Activated CD4-positive, alpha-beta T cell treated with anti-CD3 and anti-CD28 coated beads for 36 hours (primary cell): ENCODE measurements at regions of chr6 and their contacts with region 1.

Region 1: GRCh38 chr6:2876210-2877056 is 26.7 kb downstream of the SERPINB9 start:
- DNase-seq: no peak
- ATAC-seq: peak; percentile 51
- H3K4me3 Mint-ChIP-seq: peak overlapping the region; percentile 74
- H3K27ac Mint-ChIP-seq: peak overlapping the region; percentile 87
- H3K4me1 Mint-ChIP-seq: peaks cover 81% of the 10 kb centered on the region
- H3K27me3 Mint-ChIP-seq: no peaks in the 10 kb centered on the region

Region 2: DNA sequence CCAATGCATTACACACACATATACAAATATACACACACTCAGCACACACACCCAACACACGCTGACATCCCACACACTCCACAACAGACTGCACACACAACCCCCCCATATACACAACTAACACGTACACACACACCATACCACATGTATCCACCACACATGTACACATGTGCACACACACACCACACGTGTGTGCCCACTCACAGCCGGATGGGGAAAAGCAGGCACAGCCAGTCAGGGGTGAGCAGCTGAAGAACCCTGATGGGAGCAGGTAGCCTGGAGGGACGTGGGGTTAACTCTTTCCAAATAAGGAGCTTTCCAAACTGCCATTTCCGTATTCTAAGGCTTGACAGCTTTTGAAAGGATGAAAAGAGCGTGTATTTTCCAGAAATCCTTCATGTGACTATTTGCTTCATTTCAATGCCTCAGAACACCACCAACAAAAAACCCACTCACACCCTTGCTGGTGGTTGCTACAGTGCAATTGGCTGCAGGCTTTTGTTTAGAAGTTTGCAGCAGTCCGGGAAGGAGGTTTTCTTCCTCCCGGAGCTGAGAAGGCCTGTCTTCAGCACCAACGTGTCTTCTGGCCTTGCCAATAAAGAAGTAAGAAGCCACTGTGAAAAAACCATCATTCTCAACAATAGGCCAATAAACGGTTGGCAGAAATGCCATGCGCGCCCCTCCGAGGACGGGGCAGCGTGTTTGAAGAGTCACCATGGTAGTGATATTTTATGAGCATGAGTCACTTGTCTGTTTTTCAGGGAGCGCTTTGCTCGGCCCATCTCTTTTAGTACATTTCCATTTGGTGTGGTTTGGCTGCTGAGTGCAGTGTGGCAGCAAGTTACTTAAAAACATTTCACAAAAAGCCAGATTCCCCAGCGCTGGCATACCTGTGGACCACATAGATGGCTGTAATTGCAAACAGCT is 499.7 kb before region 1 on chr6:
- CTCF ChIA-PET with region 1: no interaction called
- POLR2A ChIA-PET with region 1: no interaction called
- intact Hi-C with region 1: no loop called
- DNase-seq: no peak
- ATAC-seq: no peak
- H3K4me3 Mint-ChIP-seq: no peak overlapping the region
- H3K27ac Mint-ChIP-seq: no peak overlapping the region
- H3K4me1 Mint-ChIP-seq: peaks cover 5% of the 10 kb centered on the region
- H3K27me3 Mint-ChIP-seq: no peaks in the 10 kb centered on the region

Region 3: DNA sequence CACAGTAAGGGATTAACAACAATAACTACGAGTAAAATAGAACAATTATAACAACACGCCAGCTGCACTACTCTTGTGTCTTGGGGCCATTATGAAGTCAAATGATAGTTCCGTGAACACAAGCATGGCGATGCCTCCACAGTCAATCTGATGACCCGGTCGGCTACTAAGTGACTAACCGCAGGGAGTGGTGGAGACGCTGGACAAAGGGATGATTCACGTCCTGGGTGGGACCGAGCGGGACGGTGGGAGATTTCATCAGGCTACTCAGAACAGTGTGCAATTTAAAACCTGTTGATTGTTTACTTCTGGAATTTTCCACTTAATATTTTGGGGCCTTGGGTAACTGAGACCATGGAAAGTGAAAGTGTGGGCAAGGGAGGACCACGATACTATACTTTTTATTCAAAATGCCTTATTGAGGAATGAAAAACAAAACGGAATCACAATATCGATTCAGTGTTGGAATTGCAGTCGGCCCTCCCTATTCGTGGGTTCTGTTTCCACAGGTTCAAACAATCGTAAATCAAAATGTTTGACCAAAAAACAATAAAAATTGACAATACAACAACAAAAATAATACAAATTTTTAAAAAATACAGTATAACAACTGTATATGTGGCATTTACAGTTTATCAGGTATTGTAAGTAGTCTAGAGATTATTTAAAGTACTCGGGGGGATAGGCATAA is 192.2 kb before region 1 on chr6:
- CTCF ChIA-PET with region 1: no interaction called
- POLR2A ChIA-PET with region 1: no interaction called
- intact Hi-C with region 1: no loop called
- DNase-seq: no peak
- ATAC-seq: no peak
- H3K4me3 Mint-ChIP-seq: no peak overlapping the region
- H3K27ac Mint-ChIP-seq: no peak overlapping the region
- H3K4me1 Mint-ChIP-seq: no peaks in the 10 kb centered on the region
- H3K27me3 Mint-ChIP-seq: no peaks in the 10 kb centered on the region

Region 4: GRCh38 chr6:2862712-2863181 is 13.7 kb before region 1 on chr6:
- CTCF ChIA-PET with region 1: interaction called, 9 read pairs
- POLR2A ChIA-PET with region 1: interaction called, 3 read pairs
- intact Hi-C with region 1: loop called (anchors 1 to 2 kb)
- DNase-seq: peak; percentile 77
- ATAC-seq: peak; percentile 54
- H3K4me3 Mint-ChIP-seq: peak overlapping the region; percentile 66
- H3K27ac Mint-ChIP-seq: peak overlapping the region; percentile 99
- H3K4me1 Mint-ChIP-seq: peaks cover 80% of the 10 kb centered on the region
- H3K27me3 Mint-ChIP-seq: no peaks in the 10 kb centered on the region

Region 5: DNA sequence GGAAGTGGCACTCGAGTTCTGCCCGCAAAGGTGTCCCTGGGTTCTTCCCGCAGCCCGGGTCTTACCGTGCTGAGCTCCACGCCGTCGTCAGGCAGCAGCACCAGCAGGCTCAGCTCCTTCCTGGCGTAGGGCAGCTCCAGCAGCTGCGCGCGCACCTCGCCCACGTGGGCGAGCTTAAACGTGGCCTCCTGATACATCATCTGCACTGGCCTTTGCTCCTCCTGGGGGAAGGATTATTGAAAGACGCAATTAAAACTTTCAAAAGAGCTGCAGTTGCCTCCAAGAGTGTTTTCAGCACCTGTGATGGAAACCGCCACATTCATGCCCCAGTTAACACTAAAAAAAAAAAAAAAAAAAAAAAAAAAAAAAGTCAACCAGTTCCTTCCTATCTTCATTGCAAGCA is 15.3 kb after region 1 on chr6:
- CTCF ChIA-PET with region 1: interaction called, 3 read pairs
- POLR2A ChIA-PET with region 1: interaction called, 3 read pairs
- intact Hi-C with region 1: loop called in 1 of 2 experiments (anchors 2 kb)
- DNase-seq: peak; percentile 88
- ATAC-seq: peak; percentile 91
- H3K4me3 Mint-ChIP-seq: peak overlapping the region; percentile 73
- H3K27ac Mint-ChIP-seq: peak overlapping the region; percentile 85
- H3K4me1 Mint-ChIP-seq: peaks cover 65% of the 10 kb centered on the region
- H3K27me3 Mint-ChIP-seq: no peaks in the 10 kb centered on the region

Region 6: GRCh38 chr6:2900821-2901644 is 24.6 kb after region 1 on chr6:
- CTCF ChIA-PET with region 1: interaction called, 6 read pairs
- POLR2A ChIA-PET with region 1: interaction called, 3 read pairs
- intact Hi-C with region 1: loop called in 1 of 2 experiments (anchors 2 kb)
- DNase-seq: peak; percentile 26
- ATAC-seq: no peak
- H3K4me3 Mint-ChIP-seq: peak overlapping the region; percentile 91
- H3K27ac Mint-ChIP-seq: peak overlapping the region; percentile 93
- H3K4me1 Mint-ChIP-seq: peaks cover 45% of the 10 kb centered on the region
- H3K27me3 Mint-ChIP-seq: no peaks in the 10 kb centered on the region